ENCODE measurements at regions of chr2 and their contacts with region 1.

Region 1: GRCh38 chr2:169452080-169452479 is 27.2 kb upstream of the BBS5 start:
- DNase-seq: peak; percentile 43
- ATAC-seq: peak; percentile 96
- H3K4me3 ChIP-seq: no peak overlapping the region
- H3K27ac ChIP-seq: no peak overlapping the region
- H3K4me1 ChIP-seq: no peaks in the 10 kb centered on the region
- H3K27me3 ChIP-seq: no peaks in the 10 kb centered on the region
- CTCF ChIP-seq: peak; percentile 37 to 57 (median 54); a peak in 5 of 6 replicates
- POLR2A ChIP-seq: no peak
- RAD21 ChIP-seq: peak; percentile 76

Region 2: GRCh38 chr2:170361090-170361936 is 909.2 kb after region 1 on chr2:
- CTCF ChIA-PET with region 1: interaction called, 12 read pairs
- POLR2A ChIA-PET with region 1: no interaction called
- RAD21 ChIA-PET with region 1: no interaction called
- intact Hi-C with region 1: loop called (anchors 10 kb)
- DNase-seq: peak; percentile 47
- ATAC-seq: peak; percentile 98
- H3K4me3 ChIP-seq: no peak overlapping the region
- H3K27ac ChIP-seq: no peak overlapping the region
- H3K4me1 ChIP-seq: peaks cover 0 to 6% of the 10 kb centered on the region in 2 experiments; a peak in 1 of 4 replicates
- H3K27me3 ChIP-seq: peaks cover 11% of the 10 kb centered on the region; the same call in 1 of the 2 replicates
- CTCF ChIP-seq: peak; percentile 75 to 89 (median 83)
- POLR2A ChIP-seq: no peak
- RAD21 ChIP-seq: peak; percentile 72